Sigmoid colon (tissue), 7 donors: ENCODE measurements at regions of chr6 and their contacts with region 1.

Region 1: GRCh38 chr6:103002282-103002681 is 1608.8 kb downstream of the GRIK2 start:
- DNase-seq: no peak
- H3K4me3 ChIP-seq: no peak overlapping the region
- H3K27ac ChIP-seq: no peak overlapping the region
- H3K4me1 ChIP-seq: no peaks in the 10 kb centered on the region
- H3K27me3 ChIP-seq: no peaks in the 10 kb centered on the region
- CTCF ChIP-seq: no peak
- EP300 ChIP-seq: no peak
- POLR2A ChIP-seq: no peak

Region 2: DNA sequence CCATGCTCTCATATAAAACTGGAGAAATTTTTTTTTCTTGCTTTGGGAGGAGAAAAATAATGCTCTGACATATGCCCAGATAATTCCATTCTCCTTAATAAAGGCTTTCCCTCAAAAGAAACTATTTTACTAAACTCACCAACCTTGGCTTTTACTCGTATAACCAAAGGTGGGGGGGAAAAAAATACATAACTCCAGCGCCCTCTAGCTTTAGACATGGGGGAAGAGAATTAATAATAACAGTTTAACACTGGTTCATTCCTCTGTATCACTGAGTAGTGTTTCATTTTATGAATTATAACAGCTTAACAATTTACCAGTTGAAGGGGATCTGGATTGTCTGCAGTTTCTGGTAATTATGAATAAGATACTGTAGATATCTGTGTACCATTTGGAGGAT is 382.7 kb before region 1 on chr6:
- intact Hi-C with region 1: no loop called
- DNase-seq: no peak
- H3K4me3 ChIP-seq: no peak overlapping the region
- H3K27ac ChIP-seq: no peak overlapping the region
- H3K4me1 ChIP-seq: no peaks in the 10 kb centered on the region
- H3K27me3 ChIP-seq: no peaks in the 10 kb centered on the region
- CTCF ChIP-seq: no peak
- EP300 ChIP-seq: no peak
- POLR2A ChIP-seq: no peak

Region 3: GRCh38 chr6:102981490-102982015 is 20.7 kb before region 1 on chr6:
- intact Hi-C with region 1: loop called (anchors 2 kb)
- DNase-seq: no peak
- H3K4me3 ChIP-seq: no peak overlapping the region
- H3K27ac ChIP-seq: no peak overlapping the region
- H3K4me1 ChIP-seq: no peaks in the 10 kb centered on the region
- H3K27me3 ChIP-seq: no peaks in the 10 kb centered on the region
- CTCF ChIP-seq: no peak
- EP300 ChIP-seq: no peak
- POLR2A ChIP-seq: no peak

Region 4: DNA sequence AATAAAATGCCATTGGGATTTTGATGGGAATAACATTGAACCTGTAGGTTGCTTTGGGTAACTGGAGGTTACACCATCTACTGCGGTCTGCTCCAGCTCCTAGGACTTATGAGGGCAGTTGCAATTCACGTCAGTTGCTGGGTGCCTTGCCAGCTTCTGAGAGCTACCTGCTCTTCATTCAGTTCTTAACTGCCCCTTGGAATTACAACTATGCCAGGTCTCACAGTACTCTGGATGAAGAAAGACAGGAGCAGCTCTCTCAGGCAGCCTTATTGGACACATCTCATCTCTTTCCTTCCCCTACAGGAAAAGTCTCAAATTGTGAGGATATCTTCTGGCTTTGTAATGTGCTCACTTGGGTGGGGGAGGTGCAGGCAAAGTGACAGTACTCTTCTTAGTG is 34.6 kb after region 1 on chr6:
- intact Hi-C with region 1: no loop called
- DNase-seq: no peak
- H3K4me3 ChIP-seq: no peak overlapping the region
- H3K27ac ChIP-seq: no peak overlapping the region
- H3K4me1 ChIP-seq: no peaks in the 10 kb centered on the region
- H3K27me3 ChIP-seq: no peaks in the 10 kb centered on the region
- CTCF ChIP-seq: no peak
- EP300 ChIP-seq: no peak
- POLR2A ChIP-seq: no peak